Testis (tissue), 5 donors: ENCODE measurements at regions of chr1 and their contacts with region 1.

Region 1: DNA sequence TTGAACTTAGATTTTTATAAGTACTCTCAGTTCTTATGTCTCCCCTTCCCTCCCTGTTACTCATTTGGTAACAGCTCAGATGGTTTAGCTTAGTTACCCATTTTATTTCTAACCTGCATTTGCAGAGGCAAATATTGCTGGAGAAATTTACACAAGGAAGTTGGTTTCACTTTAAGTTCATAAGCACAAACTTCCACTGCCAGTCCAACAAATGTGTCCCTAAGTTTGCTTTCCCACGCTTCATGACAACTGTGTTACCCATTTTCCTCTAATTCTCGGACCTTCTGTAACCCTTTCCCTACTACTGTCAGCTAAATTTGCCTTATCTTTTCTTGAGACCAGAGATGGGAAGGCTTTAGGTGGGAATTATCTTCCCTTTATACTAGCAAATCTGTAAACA is 63.9 kb upstream of the GPR25 start:
- DNase-seq: no peak
- H3K4me3 ChIP-seq: no peak overlapping the region
- H3K27ac ChIP-seq: no peak overlapping the region
- H3K4me1 ChIP-seq: no peaks in the 10 kb centered on the region
- H3K27me3 ChIP-seq: no peaks in the 10 kb centered on the region
- CTCF ChIP-seq: no peak
- POLR2A ChIP-seq: no peak

Region 2: DNA sequence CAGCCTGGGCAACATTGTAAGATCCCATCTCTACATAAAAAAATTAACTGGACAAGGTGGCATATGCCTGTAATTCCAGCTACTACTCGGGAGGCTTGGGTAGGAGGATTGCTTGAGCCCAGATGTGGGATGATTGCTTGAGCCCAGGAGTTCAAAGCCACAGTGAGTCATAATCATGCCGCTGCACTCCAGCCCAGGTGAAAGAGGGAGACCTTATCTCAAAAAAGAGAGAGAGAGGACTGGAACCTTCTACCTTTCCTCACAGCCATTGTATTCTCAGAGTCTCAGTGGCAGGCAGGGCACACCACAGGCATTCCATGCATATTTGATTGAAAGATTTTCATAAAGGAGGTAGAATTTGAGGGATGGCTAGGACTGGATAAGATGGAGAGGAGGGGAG is 266.7 kb before region 1 on chr1:
- intact Hi-C with region 1: no loop called
- DNase-seq: no peak
- H3K4me3 ChIP-seq: no peak overlapping the region
- H3K27ac ChIP-seq: no peak overlapping the region
- H3K4me1 ChIP-seq: no peaks in the 10 kb centered on the region
- H3K27me3 ChIP-seq: no peaks in the 10 kb centered on the region
- CTCF ChIP-seq: no peak
- POLR2A ChIP-seq: no peak

Region 3: DNA sequence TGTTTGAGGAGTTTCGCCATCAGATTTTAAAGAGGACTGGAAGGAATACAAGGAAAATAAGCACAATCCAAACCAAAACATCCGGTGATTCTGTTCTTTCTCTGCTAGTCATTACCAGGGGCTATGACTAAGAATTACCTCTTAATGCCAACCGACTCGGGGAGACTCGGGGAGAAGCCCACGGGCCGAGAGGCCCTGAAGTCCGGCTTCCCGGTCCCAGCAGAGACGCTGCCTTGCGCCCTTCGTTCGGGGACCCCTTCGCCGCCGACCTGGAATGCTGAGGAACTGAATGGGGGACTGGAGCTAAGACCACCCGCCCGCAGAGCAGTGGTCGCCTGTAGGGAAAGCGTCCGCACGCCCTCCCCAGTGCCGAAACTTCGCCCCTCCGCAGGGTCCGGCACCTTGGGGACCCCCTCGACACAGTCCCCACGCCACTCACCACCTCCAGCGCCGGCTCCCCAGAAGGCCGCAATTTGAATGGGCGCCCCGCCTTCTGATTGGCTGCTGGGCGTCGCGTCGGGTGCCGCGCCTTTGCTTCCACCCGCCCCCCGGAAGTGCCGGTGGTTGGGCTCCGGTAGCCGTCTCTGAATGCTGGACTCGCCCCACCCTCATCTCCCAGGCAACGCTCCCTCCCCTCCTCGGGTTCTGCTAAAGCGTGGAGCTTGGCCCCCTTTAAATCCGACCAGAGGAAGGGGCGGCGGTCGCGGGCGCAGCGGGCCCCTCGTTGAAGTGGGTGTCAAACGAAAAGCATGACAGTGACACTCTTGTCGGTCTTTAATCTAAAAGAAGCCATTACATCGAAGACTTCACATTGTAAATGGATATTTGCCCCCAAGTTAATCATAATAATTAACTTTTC is 188.3 kb before region 1 on chr1 and contains the start of gene KIF14:
- intact Hi-C with region 1: loop called (anchors 5 kb)
- DNase-seq: peak; percentile 96
- H3K4me3 ChIP-seq: peak within 1 kb of the TSS; percentile 58 to 82
- H3K27ac ChIP-seq: peak within 1 kb of the TSS in 1 of 2 donors; percentile 60
- H3K4me1 ChIP-seq: peaks cover 13% of the 10 kb centered on the region
- H3K27me3 ChIP-seq: no peaks in the 10 kb centered on the region
- CTCF ChIP-seq: no peak
- POLR2A ChIP-seq: no peak
- total RNA-seq, gene KIF14: 3.5 to 6.8 TPM

Region 4: GRCh38 chr1:201042779-201043461 is 234.1 kb after region 1 on chr1:
- intact Hi-C with region 1: no loop called
- DNase-seq: peak; percentile 79
- H3K4me3 ChIP-seq: no peak overlapping the region
- H3K27ac ChIP-seq: no peak overlapping the region
- H3K4me1 ChIP-seq: peaks cover 4% of the 10 kb centered on the region
- H3K27me3 ChIP-seq: no peaks in the 10 kb centered on the region
- CTCF ChIP-seq: peak; percentile 70 to 85 (median 84)
- POLR2A ChIP-seq: no peak